Panc1 (cell line): ENCODE measurements at regions of chr1 and their contacts with region 1.

Region 1: DNA sequence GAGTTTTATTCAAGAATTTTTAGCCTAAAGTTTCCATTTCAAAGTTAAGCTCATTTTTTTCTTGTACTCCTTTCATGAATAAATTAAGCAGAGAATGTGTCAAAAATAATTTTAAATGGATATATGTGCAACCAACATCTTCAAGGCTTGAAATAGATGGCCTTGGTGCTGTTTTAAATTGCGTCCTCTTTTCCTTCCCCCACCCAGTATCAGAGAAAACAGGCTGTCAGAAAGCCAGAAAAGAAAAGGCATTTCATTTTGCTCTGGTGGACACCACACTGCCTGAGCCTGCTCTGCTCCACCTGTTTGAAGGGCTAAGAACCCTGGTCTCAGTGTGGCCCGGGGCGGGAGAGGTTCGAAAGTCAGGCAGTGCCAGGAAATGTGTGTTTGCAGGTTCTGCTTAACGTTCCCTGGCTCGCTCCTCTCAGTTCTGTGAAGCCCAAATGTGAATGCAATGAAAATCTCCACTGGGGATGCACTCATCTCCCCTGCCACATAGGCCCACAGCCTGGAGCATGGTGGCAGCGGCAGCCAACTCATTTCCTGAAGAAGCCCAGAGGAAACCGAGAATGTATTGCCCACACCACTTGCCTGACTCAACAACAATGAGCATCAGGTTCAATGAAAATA is 134.4 kb downstream of the SDCCAG8 start:
- DNase-seq: no peak
- ATAC-seq: no peak
- H3K4me3 ChIP-seq: no peak overlapping the region
- H3K27ac ChIP-seq: no peak overlapping the region
- H3K4me1 ChIP-seq: no peaks in the 10 kb centered on the region
- H3K27me3 ChIP-seq: no peaks in the 10 kb centered on the region
- CTCF ChIP-seq: no peak

Region 2: GRCh38 chr1:241972703-241973369 is 1417.4 kb before region 1 on chr1:
- CTCF ChIA-PET with region 1: no interaction called
- POLR2A ChIA-PET with region 1: interaction called, 17 read pairs
- in situ Hi-C with region 1: no loop called
- intact Hi-C with region 1: no loop called
- DNase-seq: no peak
- ATAC-seq: no peak
- H3K4me3 ChIP-seq: no peak overlapping the region
- H3K27ac ChIP-seq: no peak overlapping the region
- H3K4me1 ChIP-seq: no peaks in the 10 kb centered on the region
- H3K27me3 ChIP-seq: no peaks in the 10 kb centered on the region
- CTCF ChIP-seq: no peak

Region 3: DNA sequence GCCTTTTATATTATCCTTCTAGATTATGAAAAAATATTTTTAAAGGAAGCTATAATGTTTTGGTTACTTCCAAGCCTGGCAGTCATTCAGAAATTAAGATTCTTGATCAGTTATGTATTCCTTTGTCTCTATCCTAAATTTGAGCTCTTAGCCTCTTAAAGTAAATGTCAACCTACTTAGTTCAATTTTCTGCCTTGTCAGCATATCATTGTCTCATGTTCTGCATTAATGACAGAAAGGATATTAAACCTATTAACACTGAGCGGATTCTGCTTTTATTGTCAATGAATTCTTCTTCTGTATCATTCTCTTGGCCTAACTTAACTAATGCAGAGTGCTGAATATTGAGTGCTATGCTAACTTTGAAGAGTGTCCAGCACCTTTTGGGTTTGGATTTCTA is 78.5 kb before region 1 on chr1:
- CTCF ChIA-PET with region 1: no interaction called
- POLR2A ChIA-PET with region 1: no interaction called
- in situ Hi-C with region 1: no loop called
- intact Hi-C with region 1: no loop called
- DNase-seq: no peak
- ATAC-seq: no peak
- H3K4me3 ChIP-seq: no peak overlapping the region
- H3K27ac ChIP-seq: no peak overlapping the region
- H3K4me1 ChIP-seq: no peaks in the 10 kb centered on the region
- H3K27me3 ChIP-seq: no peaks in the 10 kb centered on the region
- CTCF ChIP-seq: no peak

Region 4: GRCh38 chr1:243378669-243379068 is 11.6 kb before region 1 on chr1:
- CTCF ChIA-PET with region 1: no interaction called
- POLR2A ChIA-PET with region 1: no interaction called
- in situ Hi-C with region 1: no loop called
- intact Hi-C with region 1: no loop called
- DNase-seq: no peak
- ATAC-seq: no peak
- H3K4me3 ChIP-seq: no peak overlapping the region
- H3K27ac ChIP-seq: no peak overlapping the region
- H3K4me1 ChIP-seq: no peaks in the 10 kb centered on the region
- H3K27me3 ChIP-seq: no peaks in the 10 kb centered on the region
- CTCF ChIP-seq: no peak

Region 5: GRCh38 chr1:243528459-243529121 is 138.3 kb after region 1 on chr1:
- CTCF ChIA-PET with region 1: no interaction called
- POLR2A ChIA-PET with region 1: interaction called, 12 read pairs
- in situ Hi-C with region 1: no loop called
- intact Hi-C with region 1: no loop called
- DNase-seq: no peak
- ATAC-seq: no peak
- H3K4me3 ChIP-seq: no peak overlapping the region
- H3K27ac ChIP-seq: no peak overlapping the region
- H3K4me1 ChIP-seq: no peaks in the 10 kb centered on the region
- H3K27me3 ChIP-seq: no peaks in the 10 kb centered on the region
- CTCF ChIP-seq: no peak

Region 6: GRCh38 chr1:243786265-243786931 is 396.1 kb after region 1 on chr1:
- CTCF ChIA-PET with region 1: no interaction called
- POLR2A ChIA-PET with region 1: no interaction called
- in situ Hi-C with region 1: no loop called
- intact Hi-C with region 1: no loop called
- DNase-seq: no peak
- ATAC-seq: no peak
- H3K4me3 ChIP-seq: no peak overlapping the region
- H3K27ac ChIP-seq: no peak overlapping the region
- H3K4me1 ChIP-seq: no peaks in the 10 kb centered on the region
- H3K27me3 ChIP-seq: no peaks in the 10 kb centered on the region; the same call in 1 of the 2 replicates
- CTCF ChIP-seq: no peak